Stomach (tissue), 19 donors: ENCODE measurements at regions of chr1 and their contacts with region 1.

Region 1: DNA sequence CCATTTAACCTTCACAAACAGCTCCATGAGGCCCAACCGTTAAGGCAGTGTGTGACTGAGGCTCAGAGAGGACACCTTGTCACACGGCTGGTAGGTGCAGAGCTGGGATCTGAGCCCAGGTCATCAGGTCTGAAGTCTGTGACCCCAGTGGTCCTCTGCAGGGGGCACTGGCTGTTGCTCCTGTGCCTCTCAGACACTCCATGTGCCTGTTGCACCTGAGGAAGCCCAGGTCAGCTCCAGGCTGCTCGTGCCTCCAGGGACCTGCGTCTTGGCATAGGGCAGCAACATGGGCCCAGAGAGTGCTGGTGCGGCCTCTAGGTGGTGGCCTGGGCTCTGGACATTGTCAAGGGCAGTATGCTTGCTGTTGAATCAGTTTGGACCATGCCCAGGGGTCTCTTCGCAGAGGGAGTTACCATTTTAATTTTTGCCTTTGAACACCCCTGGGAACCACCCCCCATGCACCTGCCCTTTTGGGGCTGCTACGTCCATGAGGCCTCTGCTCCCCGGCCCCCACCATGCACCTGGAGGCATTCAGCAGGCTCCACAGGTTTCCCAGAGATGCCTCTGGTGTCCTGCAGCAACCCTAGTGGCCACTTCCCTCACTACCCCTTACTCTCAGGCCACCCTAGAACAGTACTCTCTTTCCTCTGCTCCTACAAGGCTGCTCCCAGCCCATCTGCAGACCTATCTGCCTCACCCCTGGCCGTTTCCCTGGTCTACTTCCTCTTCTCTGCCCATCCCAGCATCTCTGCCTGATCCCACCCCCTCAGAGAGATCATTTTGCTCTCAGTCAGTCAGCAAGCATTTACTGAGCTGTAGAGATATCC is 25.2 kb upstream of the EPS8L3 start:
- DNase-seq: peak in 1 of 2 donors; percentile 24
- H3K4me3 ChIP-seq: no peak overlapping the region
- H3K27ac ChIP-seq: no peak overlapping the region
- H3K4me1 ChIP-seq: peaks cover 41 to 94% (median 58%) of the 10 kb centered on the region in 4 donors
- H3K27me3 ChIP-seq: no peaks in the 10 kb centered on the region
- CTCF ChIP-seq: no peak
- EP300 ChIP-seq: no peak
- POLR2A ChIP-seq: no peak

Region 2: DNA sequence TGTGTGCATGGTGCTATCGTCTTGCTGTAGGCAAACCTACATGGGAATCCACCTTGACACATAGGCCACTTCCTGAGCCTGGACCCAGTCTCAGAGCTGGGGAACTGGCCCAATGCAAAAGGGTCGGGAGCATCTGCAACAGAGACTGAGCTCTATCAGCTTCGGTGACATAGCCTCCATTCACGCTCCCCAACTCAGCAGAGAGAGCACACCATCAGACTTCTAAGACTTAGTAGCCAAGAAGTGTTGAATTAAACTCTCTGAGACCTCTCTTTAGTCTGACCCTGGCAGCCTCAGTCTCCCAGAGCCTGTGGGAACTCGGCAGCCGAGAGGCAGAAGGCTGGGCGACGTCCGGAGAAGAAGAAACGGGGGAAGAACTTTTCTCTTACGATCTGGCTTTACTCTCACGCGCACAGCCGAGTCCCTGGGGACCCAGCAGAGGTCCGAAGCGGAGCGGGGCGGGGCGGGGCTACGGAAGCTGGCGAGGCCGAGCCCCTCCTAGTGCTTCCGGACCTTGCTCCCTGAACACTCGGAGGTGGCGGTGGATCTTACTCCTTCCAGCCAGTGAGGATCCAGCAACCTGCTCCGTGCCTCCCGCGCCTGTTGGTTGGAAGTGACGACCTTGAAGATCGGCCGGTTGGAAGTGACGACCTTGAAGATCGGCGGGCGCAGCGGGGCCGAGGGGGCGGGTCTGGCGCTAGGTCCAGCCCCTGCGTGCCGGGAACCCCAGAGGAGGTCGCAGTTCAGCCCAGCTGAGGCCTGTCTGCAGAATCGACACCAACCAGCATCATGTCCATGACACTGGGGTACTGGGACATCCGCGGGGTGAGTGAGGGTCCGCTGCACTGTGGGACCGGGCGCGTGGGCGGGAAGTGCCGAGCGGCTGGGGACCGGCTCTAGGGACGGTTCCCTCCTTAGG is 133.0 kb before region 1 on chr1 and contains the start of gene GSTM4:
- intact Hi-C with region 1: no loop called
- DNase-seq: peak; percentile 88 to 95
- H3K4me3 ChIP-seq: peak within 1 kb of the TSS; percentile 55 to 79 (median 64)
- H3K27ac ChIP-seq: peak within 1 kb of the TSS; percentile 76 to 87 (median 80)
- H3K4me1 ChIP-seq: peaks cover 12 to 40% (median 20%) of the 10 kb centered on the region in 4 donors
- H3K27me3 ChIP-seq: no peaks in the 10 kb centered on the region
- CTCF ChIP-seq: no peak
- EP300 ChIP-seq: no peak
- POLR2A ChIP-seq: no peak
- total RNA-seq, gene GSTM4: 7.5 to 63.6 (median 22.3) TPM

Region 3: GRCh38 chr1:109979489-109980091 is 190.7 kb after region 1 on chr1:
- intact Hi-C with region 1: loop called (anchors 5 kb)
- DNase-seq: peak; percentile 26 to 46
- H3K4me3 ChIP-seq: no peak overlapping the region
- H3K27ac ChIP-seq: peak overlapping the region in 4 of 5 donors; percentile 2 to 75 (median 60)
- H3K4me1 ChIP-seq: peaks cover 25 to 44% (median 33%) of the 10 kb centered on the region in 4 donors
- H3K27me3 ChIP-seq: no peaks in the 10 kb centered on the region
- CTCF ChIP-seq: no peak
- EP300 ChIP-seq: no peak
- POLR2A ChIP-seq: no peak